Activated CD4-positive, alpha-beta T cell treated with anti-CD3 and anti-CD28 coated beads for 36 hours (primary cell): ENCODE measurements at regions of chr20 and their contacts with region 1.

Region 1: DNA sequence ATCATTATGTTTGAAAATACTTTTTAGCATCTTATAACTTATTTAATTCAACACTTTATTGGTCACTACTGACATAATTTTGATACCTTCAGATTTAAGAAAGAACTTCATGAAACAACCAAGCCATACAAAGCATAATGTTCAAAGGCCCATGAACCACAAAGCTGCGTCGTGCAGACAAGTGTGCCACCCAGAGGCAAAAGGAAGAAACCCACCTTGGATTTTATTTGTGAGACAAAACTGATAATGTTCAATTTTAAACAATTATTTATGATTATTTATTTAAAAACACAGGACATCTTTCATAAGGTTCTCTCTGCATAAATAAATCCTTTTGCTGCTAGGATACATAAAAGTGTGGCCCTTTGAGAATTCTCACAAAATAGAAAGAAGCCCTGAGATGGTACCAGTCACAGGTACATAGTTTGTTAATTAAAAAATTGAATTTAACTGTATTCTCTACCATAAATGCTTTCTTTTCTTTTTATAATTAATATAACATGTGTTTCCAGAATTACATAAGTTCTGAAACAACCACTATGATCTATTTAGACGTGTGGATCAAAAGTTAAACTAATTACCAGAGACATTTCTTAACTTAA is 143.7 kb downstream of the RALGAPA2 start:
- DNase-seq: peak; percentile 63
- ATAC-seq: no peak
- H3K4me3 Mint-ChIP-seq: no peak overlapping the region
- H3K27ac Mint-ChIP-seq: no peak overlapping the region
- H3K4me1 Mint-ChIP-seq: no peaks in the 10 kb centered on the region
- H3K27me3 Mint-ChIP-seq: no peaks in the 10 kb centered on the region

Region 2: DNA sequence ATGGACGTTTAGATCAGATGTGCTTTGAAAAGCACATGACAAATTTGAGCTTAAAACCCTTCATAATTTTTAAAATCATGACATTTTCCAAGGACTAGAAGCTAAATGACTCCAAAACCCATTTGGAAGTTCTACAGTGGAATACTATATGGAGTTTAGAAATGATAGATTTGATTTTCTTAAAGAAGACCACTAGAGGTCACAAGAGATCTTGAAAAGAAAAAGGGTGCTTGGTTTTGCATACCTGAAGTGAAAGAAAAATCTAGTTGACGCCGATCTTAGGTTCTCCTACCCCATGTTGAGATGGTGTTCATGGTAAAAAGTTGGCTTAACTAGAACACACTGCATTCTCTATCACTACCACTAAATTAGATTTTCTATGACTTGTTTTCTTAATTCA is 484.9 kb before region 1 on chr20:
- CTCF ChIA-PET with region 1: interaction called, 3 read pairs
- POLR2A ChIA-PET with region 1: no interaction called
- intact Hi-C with region 1: loop called (anchors 1 to 2 kb)
- DNase-seq: no peak
- ATAC-seq: peak; percentile 44
- H3K4me3 Mint-ChIP-seq: no peak overlapping the region
- H3K27ac Mint-ChIP-seq: no peak overlapping the region
- H3K4me1 Mint-ChIP-seq: peaks cover 2% of the 10 kb centered on the region
- H3K27me3 Mint-ChIP-seq: peaks cover 10% of the 10 kb centered on the region

Region 3: GRCh38 chr20:20130399-20130798 is 438.3 kb before region 1 on chr20:
- CTCF ChIA-PET with region 1: interaction called, 3 read pairs
- POLR2A ChIA-PET with region 1: no interaction called
- intact Hi-C with region 1: loop called in 1 of 2 experiments (anchors 2 kb)
- DNase-seq: no peak
- ATAC-seq: no peak
- H3K4me3 Mint-ChIP-seq: no peak overlapping the region
- H3K27ac Mint-ChIP-seq: no peak overlapping the region
- H3K4me1 Mint-ChIP-seq: no peaks in the 10 kb centered on the region
- H3K27me3 Mint-ChIP-seq: peaks cover 27% of the 10 kb centered on the region

Region 4: GRCh38 chr20:20184149-20184548 is 384.6 kb before region 1 on chr20:
- CTCF ChIA-PET with region 1: no interaction called
- POLR2A ChIA-PET with region 1: no interaction called
- intact Hi-C with region 1: loop called (anchors 1 to 10 kb)
- DNase-seq: peak; percentile 45
- ATAC-seq: no peak
- H3K4me3 Mint-ChIP-seq: no peak overlapping the region
- H3K27ac Mint-ChIP-seq: no peak overlapping the region
- H3K4me1 Mint-ChIP-seq: no peaks in the 10 kb centered on the region
- H3K27me3 Mint-ChIP-seq: peaks cover 7% of the 10 kb centered on the region

Region 5: DNA sequence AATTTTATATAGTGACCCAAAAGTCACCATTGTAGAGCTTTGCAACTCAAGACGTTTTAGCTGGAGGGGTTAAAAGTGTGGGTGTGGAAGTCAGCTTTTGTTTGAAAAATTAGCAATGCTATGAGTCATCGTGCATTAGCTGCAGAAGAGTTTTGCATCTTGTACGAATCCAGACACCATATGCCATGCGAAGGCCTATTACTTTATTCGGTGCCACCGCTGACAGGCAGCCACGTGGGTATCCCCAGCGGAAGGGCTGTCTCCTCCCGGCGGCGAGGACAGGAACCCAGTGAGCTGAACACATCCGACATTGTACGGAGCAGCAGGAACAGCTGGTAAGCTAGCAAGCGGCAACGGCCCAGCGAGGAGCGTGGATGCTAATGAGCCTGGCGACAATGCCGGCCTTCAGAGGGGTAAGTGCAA is 116.4 kb before region 1 on chr20:
- CTCF ChIA-PET with region 1: no interaction called
- POLR2A ChIA-PET with region 1: no interaction called
- intact Hi-C with region 1: loop called in 1 of 2 experiments (anchors 5 kb)
- DNase-seq: peak; percentile 84
- ATAC-seq: peak; percentile 97
- H3K4me3 Mint-ChIP-seq: peak overlapping the region; percentile 78
- H3K27ac Mint-ChIP-seq: peak overlapping the region; percentile 71
- H3K4me1 Mint-ChIP-seq: peaks cover 46% of the 10 kb centered on the region
- H3K27me3 Mint-ChIP-seq: no peaks in the 10 kb centered on the region

Region 6: GRCh38 chr20:20547221-20547875 is 21.4 kb before region 1 on chr20:
- CTCF ChIA-PET with region 1: interaction called, 4 read pairs
- POLR2A ChIA-PET with region 1: no interaction called
- intact Hi-C with region 1: loop called in 1 of 2 experiments (anchors 2 kb)
- DNase-seq: peak; percentile 14
- ATAC-seq: peak; percentile 68
- H3K4me3 Mint-ChIP-seq: no peak overlapping the region
- H3K27ac Mint-ChIP-seq: no peak overlapping the region
- H3K4me1 Mint-ChIP-seq: peaks cover 36% of the 10 kb centered on the region
- H3K27me3 Mint-ChIP-seq: no peaks in the 10 kb centered on the region

Region 7: GRCh38 chr20:20690676-20691476 is 122.2 kb after region 1 on chr20:
- CTCF ChIA-PET with region 1: no interaction called
- POLR2A ChIA-PET with region 1: no interaction called
- intact Hi-C with region 1: no loop called
- DNase-seq: no peak
- ATAC-seq: no peak
- H3K4me3 Mint-ChIP-seq: no peak overlapping the region
- H3K27ac Mint-ChIP-seq: no peak overlapping the region
- H3K4me1 Mint-ChIP-seq: peaks cover 16% of the 10 kb centered on the region
- H3K27me3 Mint-ChIP-seq: no peaks in the 10 kb centered on the region

Region 8: DNA sequence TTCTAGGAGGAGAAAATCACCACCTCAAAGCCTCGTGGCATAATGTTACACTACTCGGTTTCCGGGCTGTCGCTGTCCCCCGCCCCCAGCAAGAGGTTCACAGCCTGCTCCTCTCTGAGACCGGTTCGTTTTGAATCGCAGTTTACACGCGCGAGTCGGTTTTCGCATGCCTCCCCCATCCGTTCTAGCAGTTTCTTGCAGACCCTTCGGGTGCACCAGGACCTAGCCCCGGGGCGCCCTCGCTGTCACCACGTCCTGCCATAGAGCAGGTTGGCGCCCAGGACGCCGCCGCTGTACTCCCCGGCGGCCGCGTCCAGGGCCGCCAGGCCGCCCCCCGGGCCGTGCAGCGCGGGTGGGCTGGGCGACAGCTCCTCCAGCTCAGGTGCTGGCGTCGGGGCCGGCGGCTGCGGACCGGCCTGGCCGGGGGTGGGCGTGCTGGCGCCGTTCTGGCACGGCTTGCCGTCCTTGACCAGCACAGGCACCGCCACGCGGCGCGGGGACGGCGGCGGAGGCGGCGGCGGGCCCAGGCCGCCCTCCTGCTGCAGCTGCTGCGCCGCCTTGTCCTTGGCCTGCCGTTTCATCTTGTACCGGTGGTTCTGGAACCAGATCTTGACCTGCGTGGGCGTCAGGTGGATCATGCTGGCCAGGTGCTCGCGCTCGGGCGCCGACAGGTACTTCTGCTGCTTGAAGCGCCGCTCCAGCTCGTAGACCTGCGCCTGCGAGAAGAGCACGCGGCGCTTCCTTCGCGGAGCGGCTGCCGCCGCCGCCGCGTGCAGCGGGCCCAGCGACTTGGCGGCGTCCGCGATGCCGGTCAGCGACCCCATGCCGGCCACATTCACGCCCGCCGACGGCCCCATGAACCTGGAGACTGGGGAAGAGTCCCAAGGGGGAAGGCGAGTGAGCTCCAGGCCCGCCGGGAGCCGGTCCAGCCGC is 827.2 kb after region 1 on chr20:
- CTCF ChIA-PET with region 1: no interaction called
- POLR2A ChIA-PET with region 1: no interaction called
- intact Hi-C with region 1: no loop called
- DNase-seq: peak; percentile 67
- ATAC-seq: peak; percentile 76
- H3K4me3 Mint-ChIP-seq: peak overlapping the region; percentile 40
- H3K27ac Mint-ChIP-seq: no peak overlapping the region
- H3K4me1 Mint-ChIP-seq: peaks cover 24% of the 10 kb centered on the region
- H3K27me3 Mint-ChIP-seq: peaks cover 62% of the 10 kb centered on the region